Activated CD4-positive, alpha-beta memory T cell treated with anti-CD3 and anti-CD28 coated beads, Interleukin-2, amount 10 ng/mL, durations not matched to agents 7 days and 5 days (primary cell): ENCODE measurements at regions of chr1 and their contacts with region 1.

Region 1: GRCh38 chr1:37486680-37487618 is 12.6 kb downstream of the ZC3H12A start:
- DNase-seq: peak; percentile 77
- H3K4me3 Mint-ChIP-seq: no peak overlapping the region
- H3K27ac Mint-ChIP-seq: peak overlapping the region; percentile 50
- H3K4me1 Mint-ChIP-seq: peaks cover 15% of the 10 kb centered on the region
- H3K27me3 Mint-ChIP-seq: no peaks in the 10 kb centered on the region

Region 2: GRCh38 chr1:37449936-37450335 is 37.0 kb before region 1 on chr1:
- CTCF ChIA-PET with region 1: interaction called, 135 read pairs
- POLR2A ChIA-PET with region 1: interaction called, 14 read pairs
- DNase-seq: peak; percentile 27
- H3K4me3 Mint-ChIP-seq: no peak overlapping the region
- H3K27ac Mint-ChIP-seq: no peak overlapping the region
- H3K4me1 Mint-ChIP-seq: peaks cover 13% of the 10 kb centered on the region
- H3K27me3 Mint-ChIP-seq: peaks cover 6% of the 10 kb centered on the region

Region 3: GRCh38 chr1:37465593-37466517 is 21.1 kb before region 1 on chr1:
- CTCF ChIA-PET with region 1: interaction called, 64 read pairs
- POLR2A ChIA-PET with region 1: interaction called, 4 read pairs
- DNase-seq: no peak
- H3K4me3 Mint-ChIP-seq: no peak overlapping the region
- H3K27ac Mint-ChIP-seq: no peak overlapping the region
- H3K4me1 Mint-ChIP-seq: peaks cover 12% of the 10 kb centered on the region
- H3K27me3 Mint-ChIP-seq: no peaks in the 10 kb centered on the region

Region 4: GRCh38 chr1:37498872-37499617 is 12.1 kb after region 1 on chr1:
- CTCF ChIA-PET with region 1: interaction called, 20 read pairs
- POLR2A ChIA-PET with region 1: interaction called, 4 read pairs
- DNase-seq: no peak
- H3K4me3 Mint-ChIP-seq: no peak overlapping the region
- H3K27ac Mint-ChIP-seq: no peak overlapping the region
- H3K4me1 Mint-ChIP-seq: peaks cover 4% of the 10 kb centered on the region
- H3K27me3 Mint-ChIP-seq: no peaks in the 10 kb centered on the region

Region 5: DNA sequence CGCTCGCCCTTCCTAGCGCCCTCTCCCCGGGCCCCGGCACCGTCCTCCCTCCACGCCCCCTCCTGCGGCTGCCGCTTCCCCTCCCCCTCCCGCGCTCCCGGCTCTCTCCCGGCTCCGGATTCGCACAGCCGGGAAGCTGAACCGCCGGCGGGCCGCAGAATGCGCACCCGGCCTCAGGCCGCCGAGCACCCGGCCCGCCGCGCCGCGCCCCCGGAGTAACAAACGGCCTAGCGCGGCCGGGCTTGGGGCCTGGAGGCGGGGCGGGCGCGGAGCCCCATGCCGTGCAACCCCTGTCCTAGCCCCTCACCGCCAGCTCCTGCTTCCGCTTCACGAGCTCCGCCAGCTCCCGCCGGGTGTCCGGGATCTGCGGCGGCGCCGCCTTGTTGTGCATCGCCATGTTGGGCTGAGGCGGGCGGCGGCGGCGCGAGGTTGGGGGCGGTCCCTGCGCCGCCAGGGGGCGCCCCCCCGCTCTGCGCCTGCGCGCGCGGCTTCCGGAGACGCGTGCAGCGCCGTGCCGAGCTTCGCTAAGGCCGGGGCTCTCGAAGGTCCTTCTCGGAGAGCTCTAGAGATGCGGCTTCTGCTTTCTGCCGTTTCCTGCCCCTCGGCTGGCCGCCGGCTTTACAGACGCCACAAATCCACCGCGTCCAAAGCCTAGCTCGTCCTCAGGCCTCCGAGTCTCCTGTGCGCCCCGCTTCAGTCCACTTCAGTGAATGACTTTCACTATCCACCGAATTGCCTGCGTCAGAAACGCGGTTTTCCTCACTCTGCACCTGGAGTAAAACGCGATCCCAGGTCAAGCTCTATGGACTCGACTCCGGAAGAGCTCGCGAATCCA is 27.6 kb after region 1 on chr1 and contains the start of gene MEAF6:
- CTCF ChIA-PET with region 1: interaction called, 30 read pairs
- POLR2A ChIA-PET with region 1: interaction called, 25 read pairs
- DNase-seq: peak; percentile 87
- H3K4me3 Mint-ChIP-seq: peak within 1 kb of the TSS; percentile 94
- H3K27ac Mint-ChIP-seq: peak within 1 kb of the TSS; percentile 83
- H3K4me1 Mint-ChIP-seq: peaks cover 38% of the 10 kb centered on the region
- H3K27me3 Mint-ChIP-seq: no peaks in the 10 kb centered on the region
- total RNA-seq, gene MEAF6: 63.7 to 64.2 TPM

Region 6: GRCh38 chr1:37595440-37596319 is 108.7 kb after region 1 on chr1 and contains the start of gene GNL2:
- CTCF ChIA-PET with region 1: no interaction called
- POLR2A ChIA-PET with region 1: no interaction called
- DNase-seq: peak; percentile 97
- H3K4me3 Mint-ChIP-seq: peak within 1 kb of the TSS; percentile 94
- H3K27ac Mint-ChIP-seq: peak within 1 kb of the TSS; percentile 90
- H3K4me1 Mint-ChIP-seq: peaks cover 38% of the 10 kb centered on the region
- H3K27me3 Mint-ChIP-seq: peaks cover 3% of the 10 kb centered on the region
- total RNA-seq, gene GNL2: 50.6 to 52.8 TPM